B cell (primary cell): ENCODE measurements at regions of chr21 and their contacts with region 1.

Region 1: GRCh38 chr21:34345892-34346291 is 17.9 kb upstream of the KCNE2 start:
- DNase-seq: no peak
- ATAC-seq: no peak
- H3K4me3 ChIP-seq: no peak overlapping the region
- H3K4me3 Mint-ChIP-seq: no peak overlapping the region
- H3K27ac ChIP-seq: no peak overlapping the region
- H3K27ac Mint-ChIP-seq: no peak overlapping the region
- H3K4me1 ChIP-seq: no peaks in the 10 kb centered on the region
- H3K4me1 Mint-ChIP-seq: peaks cover 4% of the 10 kb centered on the region
- H3K27me3 ChIP-seq: no peaks in the 10 kb centered on the region
- H3K27me3 Mint-ChIP-seq: peaks cover 12% of the 10 kb centered on the region
- CTCF ChIP-seq: no peak

Region 2: DNA sequence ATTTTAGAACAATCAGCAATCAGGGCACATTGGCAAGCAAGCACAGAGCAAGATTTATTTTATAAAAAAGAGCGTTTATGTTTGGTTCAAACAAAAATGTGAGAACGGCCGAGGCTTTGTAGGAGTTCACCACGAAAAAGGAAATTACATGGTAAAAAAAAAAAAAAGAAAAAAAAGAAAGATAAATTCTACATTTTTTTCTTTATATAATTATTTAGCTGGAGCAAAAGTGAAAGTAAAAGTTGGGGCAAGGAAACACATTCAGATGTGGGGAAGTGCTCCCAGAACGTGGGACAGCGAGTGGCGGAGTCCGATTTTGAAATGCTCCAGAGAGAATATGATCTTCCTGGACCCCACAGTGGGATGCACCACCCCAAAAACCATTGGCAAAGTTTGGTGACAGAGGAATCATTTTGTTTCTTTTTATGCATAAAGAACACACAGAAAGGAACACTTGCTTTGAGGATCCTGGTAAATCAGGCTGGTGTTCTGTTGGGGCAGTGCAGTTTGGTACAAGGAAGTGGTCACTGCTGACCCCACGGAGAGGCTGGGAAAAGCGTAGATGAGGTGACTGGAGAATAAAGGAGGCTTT is 414.0 kb before region 1 on chr21:
- CTCF ChIA-PET with region 1: interaction called, 26 read pairs
- POLR2A ChIA-PET with region 1: no interaction called
- intact Hi-C with region 1: no loop called
- DNase-seq: peak; percentile 49
- ATAC-seq: no peak
- H3K4me3 ChIP-seq: peak overlapping the region; percentile 56 to 95 (median 68)
- H3K4me3 Mint-ChIP-seq: peak overlapping the region; percentile 93
- H3K27ac ChIP-seq: peak overlapping the region; percentile 49 to 55
- H3K27ac Mint-ChIP-seq: peak overlapping the region; percentile 88
- H3K4me1 ChIP-seq: peaks cover 6 to 13% of the 10 kb centered on the region in 2 donors
- H3K4me1 Mint-ChIP-seq: peaks cover 11% of the 10 kb centered on the region
- H3K27me3 ChIP-seq: no peaks in the 10 kb centered on the region
- H3K27me3 Mint-ChIP-seq: no peaks in the 10 kb centered on the region
- CTCF ChIP-seq: no peak